Right cardiac atrium (tissue), 5 donors: ENCODE measurements at regions of chr9 and their contacts with region 1.

Region 1: DNA sequence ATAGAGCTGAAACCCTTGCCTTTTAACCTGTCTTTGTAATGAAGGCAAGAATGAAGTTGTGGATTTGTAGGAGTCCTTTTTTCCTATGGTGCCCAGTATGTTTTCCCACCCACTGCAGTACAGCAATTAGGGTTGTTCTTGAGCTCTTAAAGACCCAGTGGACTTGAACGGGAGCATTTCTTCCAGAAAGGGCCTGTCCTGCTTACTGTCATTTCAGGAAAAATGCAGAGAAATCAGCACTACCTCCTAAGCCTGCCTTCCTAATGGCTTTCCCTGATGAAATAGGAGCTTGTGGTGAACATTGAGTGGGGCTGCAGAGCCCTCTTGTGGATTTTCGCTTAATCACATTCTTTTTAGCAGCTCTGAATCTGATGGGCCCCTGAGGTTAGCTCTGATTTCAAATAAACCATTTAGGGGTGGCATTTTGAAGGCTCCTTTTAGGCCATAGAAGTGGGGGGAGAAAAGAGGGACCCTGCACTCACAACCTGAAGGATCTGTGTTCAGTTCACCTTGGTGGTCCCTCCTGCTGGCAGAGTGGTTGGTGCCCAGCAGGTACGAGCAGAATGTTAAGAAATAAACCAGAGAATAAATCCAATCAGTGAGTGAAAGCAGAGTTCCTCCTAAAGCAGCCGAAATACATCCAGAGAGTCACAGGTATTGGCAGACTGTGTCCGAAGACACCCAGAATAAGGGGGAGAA is 188.0 kb upstream of the KLF9 start:
- DNase-seq: peak; percentile 52 to 73 (median 56)
- ATAC-seq: peak; percentile 55 to 62
- H3K4me3 ChIP-seq: peak overlapping the region; percentile 30
- H3K27ac ChIP-seq: peak overlapping the region; percentile 94
- H3K4me1 ChIP-seq: peaks cover 13% of the 10 kb centered on the region
- H3K27me3 ChIP-seq: no peaks in the 10 kb centered on the region

Region 2: DNA sequence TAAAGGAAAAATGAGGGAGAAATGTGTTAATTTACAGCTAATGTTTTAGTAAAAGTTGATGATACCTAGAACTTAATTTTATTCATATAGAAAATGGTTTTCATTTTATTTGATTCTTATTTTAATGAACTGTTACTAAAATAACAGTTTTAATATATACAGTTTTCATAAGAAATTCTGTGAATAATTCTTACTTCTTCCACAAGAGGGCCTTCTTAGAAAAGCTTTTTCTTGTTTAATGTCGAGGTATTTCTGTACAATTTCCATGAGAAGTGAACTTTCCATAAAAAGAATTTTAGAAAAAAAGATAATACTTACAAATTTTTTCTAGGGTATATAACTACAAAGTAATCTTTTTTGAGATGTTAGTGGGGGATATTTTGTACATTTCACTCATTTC is 261.9 kb before region 1 on chr9:
- intact Hi-C with region 1: loop called in 2 of 4 experiments (anchors 5 kb)
- DNase-seq: no peak
- ATAC-seq: no peak
- H3K4me3 ChIP-seq: no peak overlapping the region
- H3K27ac ChIP-seq: no peak overlapping the region
- H3K4me1 ChIP-seq: no peaks in the 10 kb centered on the region
- H3K27me3 ChIP-seq: no peaks in the 10 kb centered on the region

Region 3: DNA sequence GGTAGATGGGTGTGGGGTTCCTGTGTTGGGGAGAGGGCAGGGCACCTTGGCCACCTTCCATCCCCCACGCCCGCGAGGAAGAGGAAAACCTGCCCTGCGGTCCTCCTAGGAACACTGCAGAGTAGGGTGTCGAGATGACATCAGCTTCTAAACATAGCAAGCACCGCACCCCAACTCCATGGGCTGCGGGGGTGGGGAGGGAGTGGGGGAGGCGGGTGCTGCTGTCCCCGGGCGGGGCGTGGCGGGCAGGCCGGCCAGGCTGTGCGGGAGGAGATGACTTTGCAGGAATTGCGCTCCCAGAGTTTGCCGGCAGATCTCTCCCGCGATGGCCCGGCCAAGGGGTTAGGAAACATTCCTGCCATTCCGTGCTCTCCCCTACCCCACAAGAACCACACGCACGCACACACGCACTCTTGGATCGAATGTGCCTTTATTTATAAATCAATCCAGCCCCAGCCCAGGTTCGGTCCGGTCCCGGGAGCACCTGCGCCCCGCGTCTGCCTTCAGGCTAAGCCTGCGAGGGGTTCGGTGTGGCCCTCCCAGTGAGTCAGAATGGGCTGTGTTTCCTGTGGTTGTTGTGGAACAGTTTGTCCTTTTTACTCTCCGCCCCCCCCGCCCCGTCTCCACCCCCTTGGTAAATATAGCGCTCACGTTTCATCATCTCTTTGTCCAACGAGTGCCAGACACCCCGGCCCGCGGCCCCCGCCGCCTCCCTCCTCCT is 182.8 kb before region 1 on chr9:
- intact Hi-C with region 1: loop called (anchors 2 to 10 kb)
- DNase-seq: peak; percentile 96 to 98 (median 98)
- ATAC-seq: peak; percentile 77 to 79
- H3K4me3 ChIP-seq: peak overlapping the region; percentile 45
- H3K27ac ChIP-seq: peak overlapping the region; percentile 100
- H3K4me1 ChIP-seq: peaks cover 9% of the 10 kb centered on the region
- H3K27me3 ChIP-seq: no peaks in the 10 kb centered on the region

Region 4: GRCh38 chr9:70484210-70485130 is 118.0 kb before region 1 on chr9:
- intact Hi-C with region 1: loop called in 3 of 4 experiments (anchors 5 kb)
- DNase-seq: no peak
- ATAC-seq: peak; percentile 59 to 75
- H3K4me3 ChIP-seq: no peak overlapping the region
- H3K27ac ChIP-seq: peak overlapping the region; percentile 74
- H3K4me1 ChIP-seq: peaks cover 35% of the 10 kb centered on the region
- H3K27me3 ChIP-seq: no peaks in the 10 kb centered on the region

Region 5: GRCh38 chr9:70563431-70564204 is 38.9 kb before region 1 on chr9:
- intact Hi-C with region 1: no loop called
- DNase-seq: no peak
- ATAC-seq: peak; percentile 29 to 56
- H3K4me3 ChIP-seq: no peak overlapping the region
- H3K27ac ChIP-seq: no peak overlapping the region
- H3K4me1 ChIP-seq: no peaks in the 10 kb centered on the region
- H3K27me3 ChIP-seq: no peaks in the 10 kb centered on the region

Region 6: GRCh38 chr9:70784456-70784855 is 182.0 kb after region 1 on chr9:
- intact Hi-C with region 1: no loop called
- DNase-seq: no peak
- ATAC-seq: no peak
- H3K4me3 ChIP-seq: no peak overlapping the region
- H3K27ac ChIP-seq: no peak overlapping the region
- H3K4me1 ChIP-seq: no peaks in the 10 kb centered on the region
- H3K27me3 ChIP-seq: no peaks in the 10 kb centered on the region